Left cardiac atrium (tissue), 4 donors: ENCODE measurements at regions of chr5 and their contacts with region 1.

Region 1: DNA sequence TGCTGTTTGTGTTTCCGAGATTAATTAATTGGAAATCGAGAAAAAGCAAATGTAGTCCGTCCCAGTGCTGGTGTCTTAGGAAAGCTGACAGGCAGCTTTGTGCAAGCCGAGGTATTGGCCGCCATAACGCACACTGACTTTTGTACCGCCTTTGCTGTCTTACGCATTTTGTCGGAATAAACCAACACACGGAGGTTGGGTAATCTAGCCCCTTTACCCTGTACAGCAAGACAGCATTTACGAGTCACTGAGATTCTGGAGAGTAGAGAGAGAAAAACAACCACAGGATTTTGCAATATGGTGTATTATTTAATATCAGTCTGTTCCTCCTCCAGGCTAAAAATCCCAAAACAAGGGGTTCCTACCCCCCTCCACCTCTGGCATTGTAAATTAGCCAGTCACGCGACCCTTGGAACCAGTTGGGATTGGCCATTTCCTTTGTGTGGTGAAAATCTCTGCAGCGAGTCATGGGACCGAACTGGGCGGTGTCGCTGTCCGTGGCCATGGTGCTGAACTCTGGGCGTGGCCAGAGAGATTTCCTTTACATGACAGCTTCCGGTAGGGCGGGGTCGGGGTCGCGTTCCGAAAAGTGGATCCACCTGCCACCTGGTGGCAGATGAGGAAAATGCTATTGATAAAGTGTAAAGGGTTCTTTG is 10.3 kb upstream of the PCDHB1 start:
- DNase-seq: peak; percentile 96
- ATAC-seq: peak; percentile 94 to 98

Region 2: GRCh38 chr5:140362860-140363630 is 677.9 kb before region 1 on chr5:
- intact Hi-C with region 1: loop called in 1 of 2 experiments (anchors 10 kb)
- DNase-seq: peak; percentile 81
- ATAC-seq: peak; percentile 74 to 78

Region 3: GRCh38 chr5:140855772-140856674 is 184.9 kb before region 1 on chr5 and contains the start of gene PCDHA10:
- intact Hi-C with region 1: loop called in 1 of 2 experiments (anchors 10 kb)
- DNase-seq: no peak
- ATAC-seq: no peak
- total RNA-seq, gene PCDHA10: 0.44 to 0.55 TPM

Region 4: DNA sequence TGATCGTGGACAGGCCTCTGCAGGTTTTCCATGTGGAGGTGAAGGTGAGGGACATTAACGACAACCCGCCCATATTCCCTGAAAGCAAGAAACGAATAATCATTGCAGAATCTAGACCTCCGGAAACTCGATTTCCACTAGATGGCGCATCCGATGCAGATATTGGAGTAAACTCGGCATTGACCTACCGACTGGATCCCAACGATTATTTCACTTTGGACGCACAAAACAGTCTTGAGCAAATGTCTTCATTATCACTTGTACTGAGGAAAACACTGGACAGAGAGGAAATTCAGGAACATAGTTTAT is 158.4 kb before region 1 on chr5:
- intact Hi-C with region 1: loop called in 1 of 2 experiments (anchors 10 kb)
- DNase-seq: no peak
- ATAC-seq: no peak

Region 5: GRCh38 chr5:141121563-141121962 is 80.7 kb after region 1 on chr5 and contains the start of gene PCDHB4:
- intact Hi-C with region 1: no loop called
- DNase-seq: peak; percentile 24
- ATAC-seq: no peak
- total RNA-seq, gene PCDHB4: 1.6 to 2.4 TPM

Region 6: DNA sequence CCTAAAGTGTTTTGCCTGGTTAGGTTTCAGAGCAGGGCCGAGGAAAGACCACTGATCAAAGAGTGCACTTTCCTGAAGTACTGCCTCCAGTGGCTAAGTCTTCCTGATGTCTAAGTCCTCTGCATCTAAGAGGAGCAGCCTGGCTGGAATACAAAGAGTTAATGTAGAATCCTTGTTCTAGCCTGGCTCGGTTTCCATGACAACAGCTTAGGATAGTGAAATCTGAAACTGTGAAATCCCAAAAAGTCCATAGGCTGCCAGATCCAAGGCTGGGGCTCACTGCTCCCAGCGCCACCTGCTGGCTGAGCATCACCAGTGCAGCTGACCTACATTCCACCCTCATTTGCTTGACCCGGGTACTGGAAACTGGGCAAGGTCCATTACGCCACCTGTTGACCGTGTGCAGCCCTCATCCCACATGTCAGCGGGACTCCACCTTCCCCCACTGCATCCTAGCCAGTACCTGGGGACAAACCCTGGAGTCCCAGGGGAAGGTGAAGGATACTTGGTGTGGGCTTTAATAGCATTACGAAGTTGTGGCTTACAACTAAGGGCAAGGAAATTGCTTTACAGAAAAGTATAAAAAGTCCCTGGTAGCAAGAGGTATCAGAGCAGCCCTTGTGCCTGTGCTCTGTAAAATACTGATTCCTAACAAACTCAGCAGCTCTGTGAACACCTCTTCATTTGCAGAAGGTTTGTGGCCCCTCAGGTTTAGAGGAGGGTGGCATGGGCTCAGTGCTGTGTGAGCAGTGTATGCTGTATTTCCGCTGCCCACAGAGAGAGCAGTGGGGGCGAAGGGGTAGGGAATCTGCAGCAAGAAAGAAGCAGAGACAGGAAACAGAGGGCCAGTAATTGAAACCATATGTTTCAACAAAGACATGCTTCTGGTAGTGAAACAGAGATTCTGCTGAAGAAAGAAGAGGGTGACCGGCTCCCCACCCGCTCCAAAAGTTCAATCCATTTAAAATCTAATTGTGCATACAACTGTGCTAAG is 484.0 kb after region 1 on chr5:
- intact Hi-C with region 1: no loop called
- DNase-seq: peak; percentile 85
- ATAC-seq: peak; percentile 61 to 85